ENCODE measurements at regions of chr14 and their contacts with region 1.

Region 1: DNA sequence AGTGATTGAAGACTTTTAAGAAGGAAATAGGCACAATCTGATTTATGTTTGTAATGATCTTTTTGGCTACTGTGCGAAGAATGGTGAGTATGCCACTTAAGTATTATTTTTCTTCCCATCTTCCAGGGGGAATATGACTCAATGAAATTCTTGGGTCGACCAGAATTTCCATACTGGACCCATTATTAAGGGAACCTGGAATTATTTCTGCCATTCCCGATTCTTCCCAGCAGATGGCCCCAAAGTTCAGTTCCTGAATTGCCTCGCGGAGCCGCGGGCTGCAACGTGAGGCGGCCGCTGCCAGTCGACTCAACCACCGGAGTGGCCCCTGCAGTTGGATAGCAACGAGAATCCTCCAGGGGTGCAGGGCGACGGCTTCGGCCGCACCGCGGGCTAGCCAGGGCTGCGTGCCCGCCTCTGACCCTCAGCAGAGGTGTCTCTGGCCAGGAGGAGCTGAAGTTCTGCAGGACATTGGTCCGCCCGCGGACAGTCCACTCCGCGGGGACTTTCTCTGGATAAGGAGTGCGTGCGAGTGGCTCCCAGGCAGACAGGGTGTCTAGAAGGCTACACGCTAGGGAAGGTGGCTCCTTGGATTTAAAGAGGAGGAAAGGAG is 628 bp upstream of the TSHR start:
- DNase-seq: peak; percentile 58 to 79 (median 64)
- H3K4me3 ChIP-seq: peak overlapping the region; percentile 80
- H3K4me3 Mint-ChIP-seq: peak overlapping the region; percentile 84 to 93 (median 87)
- H3K27ac ChIP-seq: no peak overlapping the region
- H3K27ac Mint-ChIP-seq: peak overlapping the region in 5 of 8 donors; percentile 23 to 85 (median 75)
- H3K4me1 ChIP-seq: peaks cover 14% of the 10 kb centered on the region
- H3K4me1 Mint-ChIP-seq: peaks cover 35 to 51% (median 48%) of the 10 kb centered on the region in 3 donors
- H3K27me3 ChIP-seq: no peaks in the 10 kb centered on the region
- H3K27me3 Mint-ChIP-seq: peaks cover 0 to 2% of the 10 kb centered on the region in 2 donors

Region 2: DNA sequence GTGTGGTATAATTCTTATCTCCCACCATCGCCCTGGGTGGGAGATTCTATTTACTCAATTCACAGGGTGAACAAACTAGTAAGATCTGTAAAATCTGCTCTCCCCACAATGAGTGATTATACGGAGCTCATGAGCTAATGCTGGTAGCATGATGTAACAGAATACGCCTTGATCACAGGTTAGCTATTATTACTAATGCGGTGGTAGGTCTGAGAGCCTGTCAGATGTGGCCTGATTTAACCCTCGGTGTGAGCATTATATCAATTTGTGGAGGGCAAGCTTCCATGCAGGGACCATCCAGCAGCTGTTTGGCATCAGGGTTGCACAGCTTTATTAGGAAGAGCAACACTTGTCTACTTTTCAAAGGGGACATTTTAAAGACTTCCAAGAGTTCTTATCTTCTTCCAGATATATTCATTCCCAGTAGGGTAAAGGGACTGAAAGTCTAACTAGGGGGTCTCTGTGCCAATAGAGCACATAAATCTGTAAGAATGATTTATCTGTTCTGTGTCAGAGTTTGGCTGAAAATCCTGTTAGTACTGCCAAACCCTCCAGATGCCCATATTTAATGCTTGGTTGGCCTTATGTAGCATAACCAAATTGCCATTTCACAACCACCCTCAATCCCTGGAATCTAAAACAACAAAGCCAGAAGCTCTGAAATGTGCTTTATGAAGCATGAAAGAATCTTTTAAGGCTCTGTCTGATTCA is 19.3 kb after region 1 on chr14:
- CTCF ChIA-PET with region 1: interaction called, 32 read pairs
- POLR2A ChIA-PET with region 1: no interaction called
- DNase-seq: peak in 1 of 5 donors; percentile 40
- H3K4me3 ChIP-seq: no peak overlapping the region
- H3K4me3 Mint-ChIP-seq: peak overlapping the region in 5 of 7 donors; percentile 1 to 55 (median 35)
- H3K27ac ChIP-seq: no peak overlapping the region
- H3K27ac Mint-ChIP-seq: peak overlapping the region in 6 of 8 donors; percentile 15 to 91 (median 48)
- H3K4me1 ChIP-seq: peaks cover 5% of the 10 kb centered on the region
- H3K4me1 Mint-ChIP-seq: peaks cover 24 to 48% (median 31%) of the 10 kb centered on the region in 3 donors
- H3K27me3 ChIP-seq: no peaks in the 10 kb centered on the region
- H3K27me3 Mint-ChIP-seq: no peaks in the 10 kb centered on the region

Region 3: DNA sequence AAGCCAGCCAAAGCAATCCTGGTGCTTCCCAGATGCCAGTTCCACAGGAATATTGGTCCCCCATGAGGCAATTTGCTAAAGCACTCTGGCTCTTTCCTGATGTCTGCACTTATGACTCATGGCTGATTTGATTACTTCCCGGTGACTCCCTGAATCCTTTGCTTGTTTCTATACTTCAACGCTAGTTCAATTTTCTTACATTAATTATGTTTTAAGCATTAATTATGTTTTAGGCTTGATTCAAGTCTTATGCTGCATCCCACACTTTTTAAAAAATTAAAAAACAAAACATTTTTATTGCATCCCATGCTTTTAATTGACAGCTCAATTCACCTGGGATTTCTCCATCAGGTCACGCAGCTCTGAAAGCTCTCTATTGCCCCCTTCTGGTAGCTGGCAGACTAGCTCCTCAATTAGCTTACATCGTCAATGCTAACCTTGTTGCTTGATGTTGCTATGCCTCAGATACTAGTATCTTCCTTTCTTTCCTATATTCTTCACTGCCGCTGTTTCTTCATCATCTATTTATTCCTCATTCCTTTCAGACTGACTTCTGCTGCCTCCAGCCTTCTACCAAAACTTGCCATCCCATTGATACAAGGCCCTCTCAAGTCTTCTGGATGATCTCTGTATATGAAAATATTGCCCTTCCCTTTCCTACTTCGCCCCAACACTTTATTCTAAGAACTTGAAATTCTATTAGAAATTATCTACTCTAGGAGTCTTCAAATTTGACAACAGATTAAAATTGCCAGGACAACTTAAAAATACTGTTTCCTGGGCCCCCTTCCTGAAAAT is 32.6 kb after region 1 on chr14:
- CTCF ChIA-PET with region 1: interaction called, 152 read pairs
- POLR2A ChIA-PET with region 1: no interaction called
- DNase-seq: peak; percentile 43 to 75 (median 51)
- H3K4me3 ChIP-seq: no peak overlapping the region
- H3K4me3 Mint-ChIP-seq: no peak overlapping the region
- H3K27ac ChIP-seq: no peak overlapping the region
- H3K27ac Mint-ChIP-seq: no peak overlapping the region
- H3K4me1 ChIP-seq: no peaks in the 10 kb centered on the region
- H3K4me1 Mint-ChIP-seq: no peaks in the 10 kb centered on the region
- H3K27me3 ChIP-seq: peaks cover 4% of the 10 kb centered on the region
- H3K27me3 Mint-ChIP-seq: peaks cover 3 to 7% of the 10 kb centered on the region in 2 donors

Measured in CD8-positive, alpha-beta memory T cell (primary cell).